OCI-LY7 (cell line): ENCODE measurements at regions of chr2 and their contacts with region 1.

Region 1: GRCh38 chr2:223860809-223861738 is 23.7 kb upstream of the AP1S3 start:
- DNase-seq: no peak
- H3K4me3 ChIP-seq: no peak overlapping the region
- H3K27ac ChIP-seq: no peak overlapping the region
- H3K4me1 ChIP-seq: peaks cover 13% of the 10 kb centered on the region
- CTCF ChIP-seq: no peak

Region 2: DNA sequence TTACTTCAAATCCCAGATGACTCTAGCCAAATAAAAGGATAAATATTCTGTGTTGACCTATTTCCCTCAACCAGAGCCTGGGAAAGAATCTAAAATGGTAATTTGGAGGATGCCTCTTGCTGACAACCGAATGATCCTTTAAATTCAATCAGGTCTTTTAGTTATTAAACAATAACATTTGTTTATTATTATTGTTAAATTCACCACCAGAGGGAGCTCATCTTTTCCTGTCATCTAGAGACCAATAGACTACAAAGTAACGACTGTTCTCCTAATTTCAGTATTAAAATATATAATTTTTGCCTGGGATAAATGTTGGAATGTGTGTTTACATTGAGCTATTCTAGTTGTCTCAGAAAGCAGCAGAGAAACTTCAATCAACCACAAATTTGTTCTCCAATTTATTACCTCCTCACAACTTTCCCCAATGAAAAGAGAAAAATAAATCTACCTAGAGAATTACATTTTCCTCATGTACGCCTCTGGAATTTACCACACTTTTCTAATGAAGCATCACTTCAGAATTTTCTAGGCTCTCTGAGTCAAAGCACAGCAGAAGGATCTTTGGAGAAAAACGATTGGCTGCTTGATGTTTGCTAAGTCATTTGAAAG is 401.6 kb before region 1 on chr2:
- CTCF ChIA-PET with region 1: no interaction called
- POLR2A ChIA-PET with region 1: interaction called, 6 read pairs
- intact Hi-C with region 1: loop called (anchors 10 kb)
- DNase-seq: peak; percentile 37
- H3K4me3 ChIP-seq: no peak overlapping the region
- H3K27ac ChIP-seq: no peak overlapping the region
- H3K4me1 ChIP-seq: no peaks in the 10 kb centered on the region
- CTCF ChIP-seq: peak; percentile 80

Region 3: GRCh38 chr2:223727562-223727961 is 133.5 kb before region 1 on chr2:
- CTCF ChIA-PET with region 1: no interaction called
- POLR2A ChIA-PET with region 1: interaction called, 4 read pairs
- intact Hi-C with region 1: loop called (anchors 1 kb)
- DNase-seq: peak; percentile 81
- H3K4me3 ChIP-seq: no peak overlapping the region
- H3K27ac ChIP-seq: no peak overlapping the region
- H3K4me1 ChIP-seq: peaks cover 3% of the 10 kb centered on the region
- CTCF ChIP-seq: peak; percentile 88

Region 4: GRCh38 chr2:223779877-223780276 is 81.2 kb before region 1 on chr2:
- CTCF ChIA-PET with region 1: no interaction called
- POLR2A ChIA-PET with region 1: no interaction called
- intact Hi-C with region 1: loop called (anchors 1 kb)
- DNase-seq: peak; percentile 81
- H3K4me3 ChIP-seq: no peak overlapping the region
- H3K27ac ChIP-seq: no peak overlapping the region
- H3K4me1 ChIP-seq: no peaks in the 10 kb centered on the region
- CTCF ChIP-seq: peak; percentile 70

Region 5: DNA sequence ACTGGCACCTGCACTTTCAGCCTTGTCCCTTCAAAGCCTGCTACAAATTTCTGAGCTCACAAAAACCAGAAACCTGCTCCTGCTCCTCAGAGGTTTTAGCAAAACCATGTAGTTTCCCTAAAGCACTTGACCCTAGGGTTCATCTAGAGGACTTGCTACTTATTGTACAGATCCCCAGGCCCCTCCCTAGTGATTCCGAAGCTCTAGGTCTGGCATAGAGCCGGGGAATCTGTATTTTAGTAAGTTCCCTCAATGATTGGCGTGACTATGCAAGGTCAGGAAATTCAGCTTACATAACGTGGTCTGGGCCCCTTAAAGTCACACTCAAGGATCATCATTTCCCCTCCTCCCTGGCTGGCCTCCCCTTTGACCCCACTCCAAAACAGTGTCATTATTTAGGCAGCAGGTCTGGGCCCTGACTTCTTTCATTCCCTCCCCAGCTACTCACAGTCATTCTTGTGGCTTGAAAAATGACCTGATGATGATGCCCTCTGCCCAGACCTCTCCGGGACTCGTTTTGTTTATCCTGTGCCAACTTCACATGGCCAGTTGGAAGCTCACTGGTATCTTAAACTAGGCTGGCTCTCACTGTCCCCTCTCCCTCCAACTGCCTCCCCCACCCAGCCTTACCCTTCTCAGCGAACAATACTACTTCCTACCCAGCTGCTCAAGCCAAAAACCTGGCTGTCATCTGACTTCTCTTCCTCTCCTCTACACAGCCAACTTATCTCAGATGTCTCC is 48.1 kb after region 1 on chr2:
- CTCF ChIA-PET with region 1: no interaction called
- POLR2A ChIA-PET with region 1: no interaction called
- intact Hi-C with region 1: no loop called
- DNase-seq: no peak
- H3K4me3 ChIP-seq: no peak overlapping the region
- H3K27ac ChIP-seq: no peak overlapping the region
- H3K4me1 ChIP-seq: no peaks in the 10 kb centered on the region
- CTCF ChIP-seq: no peak

Region 6: DNA sequence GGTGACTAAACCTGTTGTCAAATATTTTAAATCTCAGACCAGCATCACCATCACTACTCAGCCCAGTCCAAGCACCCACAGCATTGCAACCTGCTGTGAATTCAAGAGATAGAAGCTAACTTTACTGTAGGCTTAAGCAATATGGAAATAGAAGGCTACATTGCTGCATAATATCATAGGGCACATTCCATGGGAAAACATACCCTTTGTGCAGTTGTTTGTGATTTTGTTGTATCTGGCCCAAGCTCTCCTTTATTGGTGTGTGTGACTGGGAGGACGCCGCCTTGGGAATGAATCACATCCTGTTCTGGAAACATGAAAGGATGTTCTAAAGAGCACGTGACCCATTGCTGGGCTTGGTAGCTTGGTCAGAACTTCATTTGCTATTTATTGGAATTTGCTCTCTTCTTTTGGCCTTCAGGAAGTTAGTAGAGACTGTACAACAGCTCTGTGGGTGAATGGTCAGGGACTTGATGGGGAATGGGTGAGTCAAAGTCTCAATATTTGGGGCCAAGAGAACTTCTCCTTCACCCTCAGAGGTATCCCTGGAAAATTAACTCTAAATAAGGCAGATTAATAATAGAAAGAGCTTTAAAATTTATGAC is 284.8 kb after region 1 on chr2:
- CTCF ChIA-PET with region 1: no interaction called
- POLR2A ChIA-PET with region 1: no interaction called
- intact Hi-C with region 1: no loop called
- DNase-seq: no peak
- H3K4me3 ChIP-seq: no peak overlapping the region
- H3K27ac ChIP-seq: no peak overlapping the region
- H3K4me1 ChIP-seq: no peaks in the 10 kb centered on the region
- CTCF ChIP-seq: no peak